ENCODE measurements at regions of chr6 and their contacts with region 1.

Region 1: GRCh38 chr6:46376562-46377061 is 114.6 kb downstream of the RCAN2 start:
- DNase-seq: no peak
- H3K4me3 ChIP-seq: no peak overlapping the region
- CTCF ChIP-seq: no peak
- POLR2A ChIP-seq: no peak

Region 2: GRCh38 chr6:46400898-46401297 is 24.3 kb after region 1 on chr6:
- intact Hi-C with region 1: loop called (anchors 1 kb)
- DNase-seq: no peak
- H3K4me3 ChIP-seq: no peak overlapping the region
- CTCF ChIP-seq: no peak
- POLR2A ChIP-seq: no peak

Region 3: GRCh38 chr6:46719099-46719498 is 342.5 kb after region 1 on chr6:
- intact Hi-C with region 1: no loop called
- DNase-seq: no peak
- H3K4me3 ChIP-seq: no peak overlapping the region
- CTCF ChIP-seq: no peak
- POLR2A ChIP-seq: no peak

Measured in lower leg skin (tissue), 4 donors.